ENCODE measurements at regions of chr19 and their contacts with region 1.

Region 1: GRCh38 chr19:2923510-2923909 is 21.3 kb downstream of the ZNF77 start:
- DNase-seq: peak; percentile 74
- H3K4me3 Mint-ChIP-seq: no peak overlapping the region
- H3K27ac Mint-ChIP-seq: peak overlapping the region; percentile 46
- H3K4me1 Mint-ChIP-seq: peaks cover 12% of the 10 kb centered on the region
- H3K27me3 Mint-ChIP-seq: no peaks in the 10 kb centered on the region
- CTCF ChIP-seq: no peak

Region 2: DNA sequence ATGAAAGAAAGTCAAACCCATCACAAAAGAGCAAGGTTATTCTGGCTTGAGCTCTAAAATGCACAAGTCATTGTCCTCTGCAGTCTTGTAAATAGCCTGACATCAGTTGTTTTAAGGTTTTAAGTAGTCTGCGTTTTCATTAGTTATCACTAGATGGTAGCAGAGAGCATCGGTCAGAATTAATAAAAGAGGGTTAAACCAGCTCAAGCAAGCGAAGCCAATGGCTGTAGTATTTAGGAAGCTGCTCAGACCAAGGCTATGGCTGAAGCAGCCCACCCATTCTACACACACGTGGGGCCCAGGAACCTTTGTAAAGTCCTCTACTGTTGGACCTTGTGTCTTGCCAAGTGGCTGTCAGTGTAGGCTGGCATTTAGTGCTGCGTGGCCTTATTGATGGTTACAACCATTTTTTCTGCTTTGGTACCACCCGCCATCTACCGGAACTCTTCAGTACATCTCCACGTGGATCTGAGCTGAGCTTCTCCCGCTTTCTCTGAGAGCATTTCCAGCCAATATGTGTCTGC is 36.1 kb before region 1 on chr19:
- CTCF ChIA-PET with region 1: interaction called, 16 read pairs
- POLR2A ChIA-PET with region 1: interaction called, 15 read pairs
- intact Hi-C with region 1: no loop called
- DNase-seq: peak; percentile 70
- H3K4me3 Mint-ChIP-seq: no peak overlapping the region
- H3K27ac Mint-ChIP-seq: no peak overlapping the region
- H3K4me1 Mint-ChIP-seq: no peaks in the 10 kb centered on the region
- H3K27me3 Mint-ChIP-seq: no peaks in the 10 kb centered on the region
- CTCF ChIP-seq: peak; percentile 61

Region 3: DNA sequence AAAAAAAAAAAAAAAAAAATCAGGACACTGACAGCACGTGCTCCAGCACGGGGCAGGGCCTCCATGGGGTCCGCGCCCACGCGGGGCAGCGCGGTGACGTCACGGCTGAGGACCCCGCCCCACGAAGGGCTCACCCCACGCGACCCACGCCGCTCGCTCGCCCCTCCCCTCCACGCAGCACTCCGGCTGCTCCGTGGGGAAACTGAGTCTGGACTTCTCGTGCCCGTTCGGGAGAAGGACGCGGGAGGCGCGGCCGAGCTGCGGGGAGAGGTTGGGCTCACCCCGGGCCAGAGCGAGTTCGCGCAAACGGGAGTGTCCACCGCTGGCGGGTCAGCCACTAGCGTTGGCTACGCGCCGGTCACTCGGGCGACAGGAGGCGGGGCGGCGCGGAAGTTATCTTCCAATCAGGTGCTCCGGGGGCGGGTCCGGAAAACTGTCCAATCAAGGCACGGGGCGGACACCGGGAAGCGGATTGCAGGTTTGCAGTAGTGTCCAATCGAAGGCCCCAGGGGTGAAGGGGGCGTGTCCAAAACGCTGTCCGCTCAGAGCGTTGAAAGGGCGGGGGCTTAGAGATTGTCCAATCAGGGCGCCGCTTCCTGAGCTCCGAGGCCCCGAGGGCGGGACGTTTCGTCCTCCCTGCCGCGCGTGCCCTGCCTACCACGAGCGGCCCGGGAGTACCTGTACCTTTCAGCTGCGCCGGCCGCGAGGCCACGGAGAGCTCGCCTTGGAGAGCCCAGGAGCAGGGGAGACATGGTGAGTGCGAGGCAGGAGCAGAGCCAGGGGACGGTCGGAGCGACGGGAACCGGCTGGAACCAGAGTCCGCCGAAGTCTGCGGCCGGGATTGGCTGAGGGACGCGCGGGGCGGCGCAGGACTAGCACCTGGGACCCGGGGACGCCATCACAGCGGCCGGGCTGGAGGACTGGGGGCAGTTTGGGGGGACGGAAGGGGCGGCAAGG is 22.9 kb before region 1 on chr19 and contains the start of gene ZNF57:
- CTCF ChIA-PET with region 1: interaction called, 4 read pairs
- POLR2A ChIA-PET with region 1: interaction called, 51 read pairs
- intact Hi-C with region 1: no loop called
- DNase-seq: peak; percentile 100
- H3K4me3 Mint-ChIP-seq: peak within 1 kb of the TSS; percentile 94
- H3K27ac Mint-ChIP-seq: peak within 1 kb of the TSS; percentile 94
- H3K4me1 Mint-ChIP-seq: peaks cover 19% of the 10 kb centered on the region
- H3K27me3 Mint-ChIP-seq: no peaks in the 10 kb centered on the region
- CTCF ChIP-seq: no peak
- total RNA-seq, gene ZNF57: 4.8 and 5.5 TPM in 2 replicates

Region 4: GRCh38 chr19:2906634-2907195 is 16.8 kb before region 1 on chr19:
- CTCF ChIA-PET with region 1: interaction called, 8 read pairs
- POLR2A ChIA-PET with region 1: interaction called, 52 read pairs
- intact Hi-C with region 1: no loop called
- DNase-seq: no peak
- H3K4me3 Mint-ChIP-seq: no peak overlapping the region
- H3K27ac Mint-ChIP-seq: no peak overlapping the region
- H3K4me1 Mint-ChIP-seq: peaks cover 31% of the 10 kb centered on the region
- H3K27me3 Mint-ChIP-seq: no peaks in the 10 kb centered on the region
- CTCF ChIP-seq: no peak

Region 5: GRCh38 chr19:2912306-2912705 is 11.2 kb before region 1 on chr19:
- CTCF ChIA-PET with region 1: interaction called, 8 read pairs
- POLR2A ChIA-PET with region 1: interaction called, 52 read pairs
- intact Hi-C with region 1: no loop called
- DNase-seq: no peak
- H3K4me3 Mint-ChIP-seq: no peak overlapping the region
- H3K27ac Mint-ChIP-seq: no peak overlapping the region
- H3K4me1 Mint-ChIP-seq: peaks cover 13% of the 10 kb centered on the region
- H3K27me3 Mint-ChIP-seq: no peaks in the 10 kb centered on the region
- CTCF ChIP-seq: no peak

Measured in MCF 10A (cell line).